Lower lobe of right lung (tissue), 2 donors: ENCODE measurements at regions of chr16 and their contacts with region 1.

Region 1: GRCh38 chr16:14529010-14529669 is 100.9 kb downstream of the PARN start:
- DNase-seq: no peak
- ATAC-seq: peak; percentile 88 to 89
- H3K4me3 ChIP-seq: peak overlapping the region; percentile 10
- H3K27ac ChIP-seq: no peak overlapping the region
- H3K4me1 ChIP-seq: peaks cover 29% of the 10 kb centered on the region
- H3K27me3 ChIP-seq: no peaks in the 10 kb centered on the region
- CTCF ChIP-seq: peak; percentile 67

Region 2: GRCh38 chr16:14300705-14301168 is 228.4 kb before region 1 on chr16:
- intact Hi-C with region 1: loop called (anchors 10 kb)
- DNase-seq: peak; percentile 65
- ATAC-seq: peak; percentile 83 to 85
- H3K4me3 ChIP-seq: peak overlapping the region; percentile 74
- H3K27ac ChIP-seq: peak overlapping the region; percentile 49
- H3K4me1 ChIP-seq: peaks cover 8% of the 10 kb centered on the region
- H3K27me3 ChIP-seq: peaks cover 13% of the 10 kb centered on the region
- CTCF ChIP-seq: peak; percentile 56

Region 3: DNA sequence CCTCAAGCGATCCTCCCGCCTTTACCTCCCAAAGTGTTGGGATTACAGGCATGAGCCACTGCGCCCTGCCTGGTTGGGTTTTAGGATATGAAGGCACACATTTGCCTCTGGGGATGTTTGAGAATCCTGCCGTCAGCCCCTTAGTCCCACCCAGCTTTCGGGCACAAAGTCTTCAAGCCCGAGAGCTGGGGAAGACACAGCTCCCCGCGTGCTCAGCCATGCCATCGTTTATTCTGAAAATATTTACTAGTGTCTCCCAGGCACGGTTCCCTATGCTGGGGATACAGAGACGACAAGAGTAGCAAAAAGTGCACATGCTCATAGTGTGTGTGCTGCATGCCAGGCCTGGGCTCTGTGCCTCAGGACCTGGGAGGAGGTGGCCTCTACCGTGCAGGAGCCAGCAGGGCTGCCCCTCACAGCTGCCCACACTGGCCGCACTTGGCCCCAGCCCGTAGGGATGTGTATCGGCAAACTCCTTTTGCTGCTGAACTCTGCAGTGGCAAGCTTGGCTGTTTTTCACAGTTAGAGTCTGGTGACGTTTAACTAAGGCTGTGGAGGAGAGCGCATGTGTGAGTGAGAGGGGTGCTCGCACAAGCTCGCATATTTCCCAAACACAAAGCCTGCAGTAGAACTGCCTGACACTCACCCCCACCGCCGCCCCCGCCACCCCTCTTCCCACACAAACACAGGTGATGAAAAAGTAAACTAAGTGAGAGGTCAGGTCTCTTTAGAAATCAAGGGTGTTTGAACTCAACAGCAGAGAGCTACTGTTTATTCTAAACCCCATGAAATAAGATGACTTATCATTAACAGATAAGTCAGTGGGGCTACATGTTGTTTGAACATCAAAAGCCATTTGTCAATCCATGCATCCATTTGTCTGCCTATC is 191.6 kb before region 1 on chr16:
- intact Hi-C with region 1: no loop called
- DNase-seq: no peak
- ATAC-seq: peak; percentile 54 to 57
- H3K4me3 ChIP-seq: no peak overlapping the region
- H3K27ac ChIP-seq: no peak overlapping the region
- H3K4me1 ChIP-seq: no peaks in the 10 kb centered on the region
- H3K27me3 ChIP-seq: no peaks in the 10 kb centered on the region
- CTCF ChIP-seq: no peak